Posterior cingulate gyrus (tissue), 11 donors: ENCODE measurements at regions of chr5 and their contacts with region 1.

Region 1: GRCh38 chr5:126354012-126354857 is 69.0 kb upstream of the GRAMD2B start:
- DNase-seq: no peak

Region 2: GRCh38 chr5:126414874-126415502 is 60.8 kb after region 1 on chr5:
- intact Hi-C with region 1: loop called (anchors 10 kb)
- DNase-seq: no peak

Region 3: DNA sequence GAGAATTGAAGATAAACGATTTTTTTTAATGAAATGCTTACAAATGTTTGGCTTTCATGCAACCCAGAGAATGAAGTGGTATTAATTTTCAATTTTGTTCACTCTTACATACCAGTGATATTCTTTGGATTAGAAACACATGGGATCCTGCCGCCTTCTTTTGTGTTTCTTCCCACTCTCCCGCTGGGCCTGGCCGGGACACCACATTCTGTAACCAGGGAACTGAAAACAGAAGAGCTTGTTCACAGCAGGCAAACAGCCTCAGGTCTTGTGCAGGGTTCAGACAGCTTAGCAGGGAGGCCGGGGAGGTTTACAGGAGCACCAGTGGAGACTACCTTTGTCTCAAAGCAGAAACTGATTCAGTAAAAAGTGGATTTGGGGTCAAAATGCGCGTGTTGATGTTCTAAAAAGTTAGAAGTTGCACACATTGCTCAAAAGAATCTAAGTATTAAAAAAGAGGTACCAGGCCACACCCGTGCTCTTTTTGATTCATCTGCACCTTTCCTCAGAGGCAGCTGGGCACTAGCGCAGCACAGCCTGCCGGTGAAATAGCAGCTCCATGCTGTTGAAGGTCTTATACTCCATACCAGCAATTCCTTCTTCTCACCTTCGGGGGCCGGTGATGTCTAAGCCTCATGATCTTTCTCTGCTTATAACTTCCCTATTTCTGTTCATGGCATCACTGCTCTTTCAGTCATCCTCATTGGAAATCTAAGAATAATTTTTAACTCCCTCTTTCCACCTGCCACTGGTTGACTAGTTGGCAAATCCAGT is 136.1 kb after region 1 on chr5:
- intact Hi-C with region 1: loop called (anchors 5 kb)
- DNase-seq: peak in 2 of 10 donors; percentile 26 to 43

Region 4: DNA sequence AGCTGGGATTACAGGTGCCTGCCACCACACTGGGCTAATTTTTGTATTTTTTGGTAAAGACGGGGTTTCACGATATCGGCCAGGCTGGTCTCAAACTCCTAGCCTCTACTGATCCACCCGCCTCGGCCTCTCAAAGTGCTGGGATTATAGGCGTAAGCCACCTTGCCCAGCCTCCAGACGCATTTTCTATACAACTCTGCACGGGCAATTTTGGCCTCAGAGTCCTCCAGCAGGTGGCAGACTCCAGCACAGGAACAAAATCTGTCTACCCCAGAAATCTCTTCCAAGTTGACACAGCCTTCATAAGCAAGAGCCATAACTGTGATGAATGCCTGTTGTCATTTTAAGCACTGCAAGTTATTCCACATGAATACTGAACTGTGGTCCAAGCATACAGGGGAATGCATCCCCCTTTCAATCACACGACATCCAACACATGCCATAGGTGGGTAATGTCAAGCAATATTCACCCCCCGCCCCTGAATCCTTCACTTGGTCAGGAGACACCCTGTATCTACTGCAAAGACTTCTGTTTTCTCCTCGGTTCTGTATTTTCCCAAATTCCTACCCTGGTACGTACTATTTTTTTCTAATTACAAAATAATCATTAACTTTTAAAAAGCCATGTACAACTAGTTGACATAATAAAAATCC is 190.0 kb after region 1 on chr5:
- intact Hi-C with region 1: loop called (anchors 1 kb)
- DNase-seq: peak in 4 of 10 donors; percentile 33 to 87 (median 46)

Region 5: GRCh38 chr5:126594676-126595485 is 240.6 kb after region 1 on chr5 and contains the start of gene ALDH7A1:
- intact Hi-C with region 1: loop called (anchors 5 kb)
- DNase-seq: peak; percentile 71 to 97 (median 83)